Right cardiac atrium (tissue), 5 donors: ENCODE measurements at regions of chr20 and their contacts with region 1.

Region 1: GRCh38 chr20:29119141-29119540 is 2138.3 kb upstream of the DEFB115 start:
- DNase-seq: peak in 1 of 3 donors; percentile 30
- ATAC-seq: peak; percentile 39 to 59
- H3K4me3 ChIP-seq: no peak overlapping the region
- H3K27ac ChIP-seq: no peak overlapping the region
- H3K4me1 ChIP-seq: no peaks in the 10 kb centered on the region
- H3K27me3 ChIP-seq: no peaks in the 10 kb centered on the region

Region 2: DNA sequence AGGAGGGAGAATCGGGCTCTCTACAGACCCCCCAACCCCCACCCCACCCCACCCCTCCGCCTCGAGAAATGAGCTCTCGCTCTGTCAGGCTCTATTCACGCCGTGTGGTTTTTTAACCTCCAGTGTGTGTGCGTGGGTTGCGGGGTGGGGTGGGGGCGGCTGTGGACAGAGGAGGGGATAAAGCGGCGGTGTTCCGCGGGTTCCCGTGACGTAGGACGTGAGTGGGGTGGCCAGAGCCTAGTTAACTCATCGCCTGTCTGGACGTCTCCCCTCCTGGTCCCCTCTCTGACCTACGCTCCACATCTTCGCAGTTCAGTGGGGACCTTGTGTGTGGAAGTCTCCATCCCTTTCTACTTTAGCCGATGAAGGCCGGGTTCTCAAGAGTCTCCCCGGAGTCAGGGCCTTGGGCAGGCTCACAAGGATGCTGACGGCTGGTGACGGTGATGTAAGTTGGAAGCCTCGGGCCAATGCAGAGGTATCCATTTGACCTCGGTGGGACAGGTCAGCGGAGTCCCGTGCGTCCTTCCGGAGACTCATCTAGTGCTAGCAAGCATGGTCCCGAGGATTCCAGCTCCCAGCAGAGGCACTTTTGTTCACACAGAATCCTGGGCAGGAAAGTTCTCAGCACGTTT is 631.2 kb after region 1 on chr20:
- intact Hi-C with region 1: no loop called
- DNase-seq: no peak
- ATAC-seq: no peak
- H3K4me3 ChIP-seq: no peak overlapping the region
- H3K27ac ChIP-seq: no peak overlapping the region
- H3K4me1 ChIP-seq: no peaks in the 10 kb centered on the region
- H3K27me3 ChIP-seq: no peaks in the 10 kb centered on the region

Region 3: DNA sequence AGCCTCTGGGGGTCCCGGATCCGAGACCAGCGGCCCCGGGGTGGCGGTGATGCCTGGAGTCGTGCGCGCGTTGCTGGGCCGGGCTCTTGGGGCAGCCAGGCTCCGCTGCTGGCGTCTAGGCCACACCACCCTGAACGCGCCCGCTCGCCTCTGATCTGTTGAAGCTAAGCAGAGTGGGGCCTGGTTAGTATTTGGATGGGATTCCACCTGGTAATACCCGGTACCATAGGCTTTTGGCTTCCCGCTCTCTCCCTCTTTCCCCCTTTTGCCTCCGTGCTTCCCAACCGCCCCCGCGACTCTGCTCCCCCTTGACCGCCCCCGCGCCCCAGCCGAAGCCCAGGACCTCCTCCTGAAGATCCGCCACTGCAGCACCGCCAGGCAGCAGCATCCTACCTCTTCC is 754.8 kb after region 1 on chr20:
- intact Hi-C with region 1: loop called in 2 of 4 experiments (anchors 10 kb)
- DNase-seq: peak; percentile 41 to 85 (median 78)
- ATAC-seq: no peak
- H3K4me3 ChIP-seq: no peak overlapping the region
- H3K27ac ChIP-seq: no peak overlapping the region
- H3K4me1 ChIP-seq: no peaks in the 10 kb centered on the region
- H3K27me3 ChIP-seq: no peaks in the 10 kb centered on the region